Gastrocnemius medialis (tissue), 4 donors: ENCODE measurements at regions of chr4 and their contacts with region 1.

Region 1: GRCh38 chr4:169270810-169271691 is at the start of gene SH3RF1:
- DNase-seq: peak; percentile 81 to 83
- ATAC-seq: peak; percentile 85 to 88
- H3K4me3 ChIP-seq: peak within 1 kb of the TSS; percentile 73 to 95 (median 92)
- H3K27ac ChIP-seq: peak within 1 kb of the TSS; percentile 87 to 95 (median 94)
- H3K4me1 ChIP-seq: peaks cover 22 to 24% of the 10 kb centered on the region in 2 donors
- H3K27me3 ChIP-seq: no peaks in the 10 kb centered on the region
- CTCF ChIP-seq: peak in 3 of 5 experiments; percentile 35 to 52 (median 44)
- POLR2A ChIP-seq: peak; percentile 89 to 95
- total RNA-seq, gene SH3RF1: 12.6 to 27.0 (median 13.4) TPM

Region 2: DNA sequence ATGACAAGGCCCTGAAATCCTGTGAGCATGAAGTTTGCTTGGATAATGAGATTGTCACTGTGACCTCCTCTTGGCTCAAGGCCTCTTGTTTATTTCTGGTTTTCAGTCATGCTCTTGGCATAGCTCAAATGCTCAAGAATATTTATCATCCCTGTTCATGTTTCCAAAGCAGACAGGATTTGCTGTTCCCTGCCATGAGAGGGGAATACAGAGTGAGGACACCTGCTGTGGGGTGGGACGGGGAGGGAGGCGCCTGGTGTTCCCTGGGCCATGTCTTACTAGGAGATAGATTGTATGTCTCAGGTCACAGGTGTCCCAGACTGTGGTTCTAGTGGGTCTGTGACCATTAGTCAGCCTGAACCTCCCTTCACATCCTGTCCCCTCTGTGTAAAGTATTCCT is 34.6 kb after region 1 on chr4:
- in situ Hi-C with region 1: no loop called
- intact Hi-C with region 1: loop called (anchors 1 kb)
- DNase-seq: peak; percentile 85 to 86
- ATAC-seq: peak; percentile 98
- H3K4me3 ChIP-seq: no peak overlapping the region
- H3K27ac ChIP-seq: peak overlapping the region; percentile 73 to 87 (median 83)
- H3K4me1 ChIP-seq: peaks cover 13 to 14% of the 10 kb centered on the region in 2 donors
- H3K27me3 ChIP-seq: no peaks in the 10 kb centered on the region
- CTCF ChIP-seq: peak in 1 of 5 experiments; percentile 11
- POLR2A ChIP-seq: peak; percentile 12 to 28